ENCODE measurements at regions of chr12 and their contacts with region 1.

Region 1: DNA sequence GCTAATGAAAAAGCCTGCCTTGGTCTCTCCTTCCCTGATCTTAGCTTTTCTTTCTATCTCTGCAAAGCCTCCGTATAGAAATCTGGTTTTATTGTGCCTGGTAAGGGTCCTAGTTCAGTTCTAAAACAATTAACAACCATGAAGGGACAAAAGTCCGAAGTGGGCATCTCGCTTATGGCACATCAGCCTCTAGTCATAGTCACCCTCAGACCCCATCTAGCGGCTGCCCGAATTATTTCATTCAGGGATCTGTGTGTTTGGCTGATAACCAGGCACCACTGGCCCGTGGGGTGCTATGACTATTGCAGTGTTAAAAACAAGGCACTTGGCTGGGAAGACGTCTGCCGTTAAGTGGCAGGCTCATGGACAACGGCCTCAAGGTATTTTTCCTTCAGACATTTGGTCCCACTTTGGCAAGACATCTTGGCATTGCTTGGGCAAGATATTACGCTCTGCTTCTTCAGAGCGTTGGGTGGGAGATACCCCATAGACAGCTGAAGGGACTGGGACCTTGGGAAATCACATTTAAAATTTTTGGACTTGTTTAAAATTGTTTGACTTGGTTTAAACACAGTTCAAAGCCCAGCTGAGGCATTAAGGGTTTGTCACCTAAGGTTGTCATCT is 87.1 kb downstream of the SINHCAF start:
- DNase-seq: peak; percentile 54 to 67 (median 61)
- ATAC-seq: peak; percentile 90
- H3K4me3 ChIP-seq: no peak overlapping the region
- H3K27ac ChIP-seq: no peak overlapping the region
- H3K4me1 ChIP-seq: no peaks in the 10 kb centered on the region
- H3K27me3 ChIP-seq: peaks cover 45 to 61% of the 10 kb centered on the region in 2 experiments
- CTCF ChIP-seq: peak; percentile 69 to 72 (median 72)
- EP300 ChIP-seq: no peak
- POLR2A ChIP-seq: no peak
- RAD21 ChIP-seq: peak; percentile 29 to 68; a peak in 3 of 4 replicates

Region 2: GRCh38 chr12:29545102-29545467 is 1693.8 kb before region 1 on chr12:
- CTCF ChIA-PET with region 1: no interaction called
- POLR2A ChIA-PET with region 1: no interaction called
- in situ Hi-C with region 1: loop called (anchors 25 kb)
- intact Hi-C with region 1: no loop called
- DNase-seq: no peak
- ATAC-seq: no peak
- H3K4me3 ChIP-seq: no peak overlapping the region
- H3K27ac ChIP-seq: no peak overlapping the region
- H3K4me1 ChIP-seq: no peaks in the 10 kb centered on the region
- H3K27me3 ChIP-seq: no peaks in the 10 kb centered on the region
- CTCF ChIP-seq: no peak
- EP300 ChIP-seq: no peak
- POLR2A ChIP-seq: no peak
- RAD21 ChIP-seq: no peak

Region 3: GRCh38 chr12:30461026-30461615 is 777.8 kb before region 1 on chr12:
- CTCF ChIA-PET with region 1: no interaction called
- POLR2A ChIA-PET with region 1: no interaction called
- in situ Hi-C with region 1: no loop called
- intact Hi-C with region 1: no loop called
- DNase-seq: no peak
- ATAC-seq: no peak
- H3K4me3 ChIP-seq: no peak overlapping the region
- H3K27ac ChIP-seq: no peak overlapping the region
- H3K4me1 ChIP-seq: peaks cover 0 to 5% of the 10 kb centered on the region in 2 experiments; a peak in 2 of 5 replicates
- H3K27me3 ChIP-seq: peaks cover 0 to 4% of the 10 kb centered on the region in 2 experiments; a peak in 1 of 5 replicates
- CTCF ChIP-seq: no peak
- EP300 ChIP-seq: no peak
- POLR2A ChIP-seq: no peak
- RAD21 ChIP-seq: no peak

Region 4: DNA sequence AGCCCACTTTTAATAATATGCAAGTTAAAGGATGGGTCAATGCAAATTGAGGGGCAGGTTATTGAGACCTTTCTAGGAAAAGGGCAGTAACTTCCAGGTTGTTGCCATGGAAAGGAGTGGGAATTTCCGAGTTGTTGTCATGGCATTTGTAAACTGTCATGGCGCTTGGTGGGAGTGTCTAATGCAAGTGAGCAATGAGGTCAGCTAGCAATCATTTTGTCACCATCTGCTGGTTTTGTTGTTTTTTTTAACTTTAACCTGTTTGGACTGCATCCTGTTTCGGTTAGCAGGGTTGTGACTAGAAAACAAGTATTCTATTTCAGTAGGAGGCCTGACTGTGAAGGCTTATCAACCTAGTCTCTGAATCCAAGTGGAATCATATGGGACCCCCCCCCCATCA is 398.2 kb before region 1 on chr12:
- CTCF ChIA-PET with region 1: no interaction called
- POLR2A ChIA-PET with region 1: no interaction called
- in situ Hi-C with region 1: loop called (anchors 5 kb)
- intact Hi-C with region 1: no loop called
- DNase-seq: no peak
- ATAC-seq: peak; percentile 21; the same call in 1 of the 3 replicates
- H3K4me3 ChIP-seq: no peak overlapping the region
- H3K27ac ChIP-seq: no peak overlapping the region
- H3K4me1 ChIP-seq: peaks cover 0 to 2% of the 10 kb centered on the region in 2 experiments; a peak in 2 of 5 replicates
- H3K27me3 ChIP-seq: peaks cover 5 to 24% of the 10 kb centered on the region in 2 experiments
- CTCF ChIP-seq: no peak
- EP300 ChIP-seq: no peak
- POLR2A ChIP-seq: no peak
- RAD21 ChIP-seq: no peak

Region 5: DNA sequence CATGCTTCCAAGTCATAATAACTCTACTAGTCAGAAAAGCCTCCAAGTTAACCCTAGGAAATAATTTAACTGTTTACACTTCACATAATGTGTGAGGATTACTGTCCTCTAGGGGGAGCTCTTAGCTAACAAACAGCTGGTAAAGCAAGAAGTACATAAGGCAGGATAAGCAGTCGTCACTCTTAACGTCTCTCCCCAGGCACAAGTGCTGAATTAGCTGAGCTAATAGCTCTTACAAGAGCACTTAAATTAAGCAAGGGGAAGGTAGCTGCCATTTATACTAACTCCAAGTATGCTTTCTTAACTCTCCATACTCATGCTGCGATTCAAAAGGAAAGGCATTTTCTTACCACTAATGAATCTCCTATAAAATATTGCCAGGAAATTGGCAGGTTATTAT is 391.6 kb before region 1 on chr12:
- CTCF ChIA-PET with region 1: interaction called, 5 read pairs
- POLR2A ChIA-PET with region 1: no interaction called
- in situ Hi-C with region 1: loop called (anchors 5 kb)
- intact Hi-C with region 1: loop called (anchors 2 kb)
- DNase-seq: peak in 3 of 4 experiments; percentile 37 to 81 (median 40)
- ATAC-seq: peak; percentile 65
- H3K4me3 ChIP-seq: no peak overlapping the region
- H3K27ac ChIP-seq: no peak overlapping the region
- H3K4me1 ChIP-seq: peaks cover 0 to 2% of the 10 kb centered on the region in 2 experiments; a peak in 3 of 5 replicates
- H3K27me3 ChIP-seq: peaks cover 6 to 13% of the 10 kb centered on the region in 2 experiments; a peak in 4 of 5 replicates
- CTCF ChIP-seq: peak; percentile 66 to 83 (median 70)
- EP300 ChIP-seq: no peak
- POLR2A ChIP-seq: no peak
- RAD21 ChIP-seq: peak; percentile 86 to 96

Region 6: DNA sequence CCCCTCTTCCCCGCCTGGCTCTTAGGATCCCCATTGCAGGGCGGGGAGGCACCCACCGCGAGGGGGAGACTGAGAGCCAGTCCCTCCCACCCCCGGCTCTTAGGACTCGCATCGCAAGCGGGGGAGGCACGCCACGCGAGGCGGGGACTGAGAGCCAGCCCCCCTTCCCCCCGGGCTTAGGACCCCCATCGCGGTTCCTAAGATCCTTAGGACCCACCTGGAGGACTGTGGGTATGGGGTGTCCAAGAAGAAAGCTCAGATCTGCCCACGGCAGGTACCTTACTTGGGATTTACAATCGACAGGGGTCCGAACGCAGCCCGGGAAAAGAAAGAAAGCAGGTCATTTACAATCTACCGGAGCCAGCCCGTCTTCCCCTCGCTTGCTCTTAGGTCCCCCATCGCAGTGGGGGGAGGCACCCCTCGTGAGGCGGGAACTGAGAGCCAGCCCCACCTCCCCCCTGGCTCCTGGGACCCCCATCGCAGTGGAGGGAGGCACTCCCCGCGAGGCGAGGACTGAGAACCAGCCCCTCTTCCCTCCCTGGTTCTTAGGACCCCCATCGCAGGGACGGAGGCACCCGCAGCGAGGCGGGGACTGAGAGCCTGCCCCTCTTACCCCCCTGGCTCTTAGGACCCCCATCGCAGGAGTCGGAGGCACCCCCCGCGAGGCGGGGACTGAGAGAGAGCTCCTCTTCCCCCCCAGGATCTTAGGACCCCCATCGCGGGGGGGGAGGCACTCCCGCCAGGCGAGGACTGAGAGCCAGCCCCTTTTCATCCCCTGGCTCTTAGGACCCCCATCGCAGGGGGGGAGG is 121.5 kb before region 1 on chr12:
- CTCF ChIA-PET with region 1: no interaction called
- POLR2A ChIA-PET with region 1: no interaction called
- in situ Hi-C with region 1: no loop called
- intact Hi-C with region 1: loop called (anchors 5 kb)
- DNase-seq: peak; percentile 71 to 80 (median 72)
- ATAC-seq: peak; percentile 94
- H3K4me3 ChIP-seq: peak overlapping the region; percentile 38
- H3K27ac ChIP-seq: no peak overlapping the region
- H3K4me1 ChIP-seq: peaks cover 0 to 30% of the 10 kb centered on the region in 2 experiments; a peak in 2 of 5 replicates
- H3K27me3 ChIP-seq: no peaks in the 10 kb centered on the region
- CTCF ChIP-seq: peak; percentile 68 to 78 (median 70)
- EP300 ChIP-seq: no peak
- POLR2A ChIP-seq: no peak
- RAD21 ChIP-seq: peak; percentile 24 to 60; a peak in 2 of 4 replicates